ENCODE measurements at regions of chr13 and their contacts with region 1.

Region 1: GRCh38 chr13:44141725-44142539 is 231.7 kb upstream of the SERP2 start:
- DNase-seq: peak; percentile 94
- H3K4me3 Mint-ChIP-seq: peak overlapping the region; percentile 85
- H3K27ac Mint-ChIP-seq: peak overlapping the region; percentile 82
- H3K4me1 Mint-ChIP-seq: peaks cover 26% of the 10 kb centered on the region
- H3K27me3 Mint-ChIP-seq: peaks cover 41% of the 10 kb centered on the region

Region 2: GRCh38 chr13:43878892-43879754 is 262.8 kb before region 1 on chr13 and contains the start of gene CCDC122:
- intact Hi-C with region 1: loop called (anchors 5 kb)
- DNase-seq: peak; percentile 75
- H3K4me3 Mint-ChIP-seq: peak within 1 kb of the TSS; percentile 84
- H3K27ac Mint-ChIP-seq: peak within 1 kb of the TSS; percentile 81
- H3K4me1 Mint-ChIP-seq: peaks cover 28% of the 10 kb centered on the region
- H3K27me3 Mint-ChIP-seq: peaks cover 15% of the 10 kb centered on the region
- total RNA-seq, gene CCDC122: 0.86 and 1.5 TPM in 2 replicates

Region 3: DNA sequence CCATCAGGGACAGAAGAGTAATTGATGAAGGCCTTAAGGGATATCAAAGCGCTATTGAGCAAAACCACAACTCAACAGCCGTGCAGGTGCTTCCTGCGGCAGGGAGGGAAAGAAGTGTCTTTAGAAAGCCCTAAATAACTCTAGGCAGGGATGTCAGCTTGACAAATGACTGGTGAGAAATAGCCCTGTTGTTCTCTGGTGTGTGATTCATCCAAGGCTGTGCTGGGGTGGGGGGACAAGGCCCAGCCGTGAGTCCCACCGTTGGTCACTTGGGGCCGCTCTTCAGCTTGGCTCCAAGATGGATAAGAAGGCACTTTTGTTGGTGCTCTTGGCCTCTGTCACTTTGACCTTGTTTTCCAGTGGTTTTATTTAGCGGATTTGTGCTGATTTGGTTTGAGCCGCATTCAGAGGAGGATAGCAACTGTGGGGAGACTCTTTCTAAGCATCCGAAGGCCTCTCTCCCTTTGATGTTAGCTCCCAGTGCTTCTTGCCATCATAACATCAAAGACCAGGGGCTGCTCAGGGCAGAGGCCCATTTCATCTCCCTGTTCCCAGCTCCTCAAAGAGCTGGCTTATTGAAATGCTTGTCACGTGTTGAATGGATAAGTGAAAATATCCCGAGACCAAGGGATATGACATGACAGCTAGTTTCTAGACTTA is 101.4 kb after region 1 on chr13:
- intact Hi-C with region 1: loop called (anchors 1 kb)
- DNase-seq: no peak
- H3K4me3 Mint-ChIP-seq: no peak overlapping the region
- H3K27ac Mint-ChIP-seq: no peak overlapping the region
- H3K4me1 Mint-ChIP-seq: peaks cover 8% of the 10 kb centered on the region
- H3K27me3 Mint-ChIP-seq: peaks cover 22% of the 10 kb centered on the region

Region 4: DNA sequence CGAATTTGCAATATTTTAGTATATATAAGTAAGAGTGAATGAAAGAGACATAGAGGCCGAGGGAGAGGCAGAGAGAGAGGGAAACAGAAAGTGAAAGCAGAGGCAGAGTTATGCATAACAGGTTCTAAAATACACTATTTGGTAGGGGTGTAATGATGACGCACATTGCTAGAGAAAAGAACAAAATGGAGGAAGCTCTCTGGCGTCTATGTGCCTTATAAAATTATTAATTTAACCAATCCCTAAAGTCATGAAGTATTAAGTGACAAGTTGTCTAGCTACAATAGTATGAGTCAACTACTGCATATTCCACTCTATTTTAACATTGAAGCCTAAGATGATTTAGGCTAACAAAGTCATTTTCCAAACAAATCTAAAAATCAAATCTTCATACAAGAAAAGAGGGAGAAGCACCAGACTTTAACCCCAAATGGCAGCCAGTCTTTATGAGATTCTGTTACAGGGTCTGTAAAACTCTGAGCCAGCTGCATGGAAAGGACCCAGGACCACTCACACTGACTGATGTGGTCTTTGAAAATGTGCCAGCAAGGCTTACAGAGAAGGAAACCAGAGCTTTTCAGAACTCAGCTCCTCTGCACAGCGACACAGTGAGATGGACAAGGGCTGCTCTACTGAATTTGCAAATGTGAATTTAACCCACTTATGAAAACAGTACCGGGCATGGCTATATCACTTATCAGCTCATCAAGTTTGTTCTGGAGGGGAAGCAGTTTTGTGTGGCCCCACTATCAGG is 132.7 kb after region 1 on chr13:
- intact Hi-C with region 1: loop called (anchors 2 kb)
- DNase-seq: peak; percentile 22
- H3K4me3 Mint-ChIP-seq: peak overlapping the region; percentile 56
- H3K27ac Mint-ChIP-seq: peak overlapping the region; percentile 85
- H3K4me1 Mint-ChIP-seq: peaks cover 60% of the 10 kb centered on the region
- H3K27me3 Mint-ChIP-seq: no peaks in the 10 kb centered on the region

Region 5: DNA sequence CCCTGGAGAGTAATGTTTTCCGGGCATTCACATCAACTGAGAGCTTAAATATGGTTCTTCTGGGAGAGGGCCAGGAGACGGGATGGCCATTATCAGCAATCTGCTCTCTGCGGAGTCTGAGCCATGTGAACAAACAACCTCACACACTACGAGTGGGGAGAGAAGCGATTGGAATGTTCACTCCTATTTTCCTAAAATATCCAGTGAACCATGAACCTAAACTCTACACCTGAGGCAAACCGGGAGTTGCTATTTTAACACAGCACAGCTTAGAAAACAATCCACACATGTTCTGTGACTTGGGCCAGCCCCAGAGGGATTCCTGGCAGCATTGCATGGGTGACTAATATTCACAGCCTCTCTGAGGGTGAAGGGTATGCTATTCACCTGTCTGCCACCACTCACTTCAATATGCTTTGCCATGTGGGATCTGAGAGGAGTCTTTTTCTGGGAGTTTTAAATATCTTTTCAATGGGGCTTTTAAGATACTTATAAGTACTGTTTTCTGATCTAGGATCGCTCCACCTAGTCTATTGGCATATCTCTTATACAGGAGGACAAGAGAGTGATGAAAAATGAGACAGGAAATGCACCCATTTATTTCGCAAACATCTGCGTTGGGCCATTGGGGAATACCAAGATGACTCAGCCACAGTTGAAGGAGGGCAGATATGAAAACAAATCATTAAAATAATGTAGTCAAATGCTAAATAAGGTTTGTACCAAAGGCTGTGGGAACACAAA is 159.1 kb after region 1 on chr13:
- intact Hi-C with region 1: loop called (anchors 5 kb)
- DNase-seq: no peak
- H3K4me3 Mint-ChIP-seq: peak overlapping the region; percentile 5
- H3K27ac Mint-ChIP-seq: peak overlapping the region; percentile 27
- H3K4me1 Mint-ChIP-seq: peaks cover 51% of the 10 kb centered on the region
- H3K27me3 Mint-ChIP-seq: peaks cover 3% of the 10 kb centered on the region

Region 6: DNA sequence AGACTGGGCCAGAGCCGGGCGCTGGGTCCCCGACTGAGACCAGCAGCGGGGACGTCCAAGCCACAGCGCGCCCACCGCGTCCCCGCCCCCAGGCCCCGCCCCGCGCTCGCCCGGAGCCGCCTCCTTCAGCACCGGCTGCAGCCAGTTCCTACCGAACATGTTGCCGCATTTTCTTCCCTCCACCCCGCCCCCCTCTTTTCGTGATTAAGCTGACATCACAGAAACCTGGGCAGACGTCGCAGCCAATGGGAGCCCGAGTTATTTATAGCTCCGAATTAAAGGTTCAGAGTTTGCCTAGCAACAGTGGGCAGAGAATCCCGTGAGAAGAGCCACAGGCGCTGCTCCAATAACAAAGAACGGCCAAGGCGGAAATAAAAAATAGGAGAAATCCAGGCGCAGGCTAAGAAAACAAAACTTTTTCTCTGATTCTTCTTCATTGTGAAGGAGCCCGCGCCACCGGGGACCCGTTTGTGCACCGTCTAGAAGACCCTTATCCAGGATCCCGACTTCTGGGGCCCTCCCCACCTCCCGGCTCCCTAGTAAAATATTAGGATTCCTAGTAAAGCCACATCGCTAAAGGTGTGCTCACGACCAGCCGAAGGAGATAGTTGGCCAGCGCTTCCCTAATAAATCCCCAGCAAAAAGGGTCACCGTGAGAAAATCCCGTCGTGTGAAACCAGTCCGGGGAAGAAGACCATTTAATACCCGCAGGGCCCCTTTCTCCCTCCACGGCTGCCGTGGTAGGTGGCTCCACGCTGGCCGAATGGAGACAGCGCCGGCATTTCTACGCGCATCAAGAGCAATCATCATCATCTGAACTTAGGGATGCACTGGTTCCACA is 293.4 kb after region 1 on chr13:
- intact Hi-C with region 1: loop called (anchors 1 kb)
- DNase-seq: peak; percentile 70
- H3K4me3 Mint-ChIP-seq: peak overlapping the region; percentile 83
- H3K27ac Mint-ChIP-seq: peak overlapping the region; percentile 72
- H3K4me1 Mint-ChIP-seq: peaks cover 17% of the 10 kb centered on the region
- H3K27me3 Mint-ChIP-seq: peaks cover 47% of the 10 kb centered on the region

Region 7: GRCh38 chr13:45417790-45418534 is 1276.0 kb after region 1 on chr13 and contains the start of gene SLC25A30:
- intact Hi-C with region 1: loop called (anchors 5 kb)
- DNase-seq: peak; percentile 85
- H3K4me3 Mint-ChIP-seq: peak within 1 kb of the TSS; percentile 94
- H3K27ac Mint-ChIP-seq: peak within 1 kb of the TSS; percentile 92
- H3K4me1 Mint-ChIP-seq: peaks cover 18% of the 10 kb centered on the region
- H3K27me3 Mint-ChIP-seq: no peaks in the 10 kb centered on the region
- total RNA-seq, gene SLC25A30: 16.0 and 16.3 TPM in 2 replicates

Measured in activated T-helper 1 cell treated with anti-CD3 and anti-CD28 coated beads, Interleukin-12 subunit alpha, Interleukin-12 subunit beta, Interleukin-2, Interleukin-4 antibody, amounts not matched to agents 30 ng/mL and 10 ng/mL and 1 ng/mL, durations not matched to agents 14 hours and 24 hours and 36 hours (primary cell).